ENCODE measurements at regions of chr3 and their contacts with region 1.

Region 1: GRCh38 chr3:76985645-76986044 is 54.3 kb upstream of the ROBO2 start:
- DNase-seq: no peak
- ATAC-seq: no peak
- H3K4me3 Mint-ChIP-seq: no peak overlapping the region
- H3K27ac Mint-ChIP-seq: no peak overlapping the region
- H3K4me1 Mint-ChIP-seq: peaks cover 9% of the 10 kb centered on the region
- H3K27me3 Mint-ChIP-seq: no peaks in the 10 kb centered on the region; the same call in 1 of the 2 replicates
- CTCF ChIP-seq: no peak

Region 2: DNA sequence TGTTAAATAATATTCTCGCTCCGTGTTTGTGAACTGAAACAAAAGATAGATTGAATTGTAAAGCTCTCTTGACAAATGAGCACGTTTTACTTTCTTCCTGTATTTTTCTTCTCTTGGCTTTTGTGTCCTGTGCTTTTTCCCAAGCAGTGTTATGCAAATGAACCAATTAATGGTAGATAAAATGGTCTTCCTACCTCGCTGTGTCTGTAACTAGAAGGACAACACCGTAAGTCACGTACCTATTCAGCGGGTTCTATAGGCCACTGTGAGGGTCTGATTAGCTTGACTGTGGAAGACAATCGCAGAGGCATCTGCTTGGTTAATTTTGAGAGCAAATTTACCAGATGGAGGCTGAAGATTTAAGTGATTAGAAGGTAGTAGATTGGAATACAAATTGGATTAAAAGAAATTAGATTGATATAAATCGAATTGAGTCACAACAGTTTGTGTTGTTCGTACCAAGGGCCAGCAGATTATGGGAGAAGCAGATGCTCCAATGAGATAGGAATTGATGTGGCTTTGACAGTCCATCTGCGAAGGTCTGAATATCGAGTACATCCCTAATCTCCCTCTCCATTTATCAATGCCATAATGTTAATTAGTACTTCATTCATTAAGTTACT is 94.5 kb after region 1 on chr3:
- CTCF ChIA-PET with region 1: no interaction called
- POLR2A ChIA-PET with region 1: interaction called, 11 read pairs
- DNase-seq: no peak
- ATAC-seq: peak; percentile 97
- H3K4me3 Mint-ChIP-seq: peak overlapping the region; percentile 40
- H3K27ac Mint-ChIP-seq: peak overlapping the region; percentile 96
- H3K4me1 Mint-ChIP-seq: peaks cover 54% of the 10 kb centered on the region
- H3K27me3 Mint-ChIP-seq: no peaks in the 10 kb centered on the region
- CTCF ChIP-seq: no peak